Astrocyte of the cerebellum (primary cell): ENCODE measurements at regions of chr11 and their contacts with region 1.

Region 1: GRCh38 chr11:120511116-120511819 is at the start of gene GRIK4:
- DNase-seq: peak; percentile 40
- H3K4me3 ChIP-seq: peak within 1 kb of the TSS; percentile 36
- CTCF ChIP-seq: peak; percentile 85

Region 2: GRCh38 chr11:120554766-120555432 is 43.6 kb after region 1 on chr11:
- in situ Hi-C with region 1: loop called (anchors 5 kb)
- DNase-seq: peak; percentile 24
- H3K4me3 ChIP-seq: no peak overlapping the region
- CTCF ChIP-seq: no peak

Region 3: DNA sequence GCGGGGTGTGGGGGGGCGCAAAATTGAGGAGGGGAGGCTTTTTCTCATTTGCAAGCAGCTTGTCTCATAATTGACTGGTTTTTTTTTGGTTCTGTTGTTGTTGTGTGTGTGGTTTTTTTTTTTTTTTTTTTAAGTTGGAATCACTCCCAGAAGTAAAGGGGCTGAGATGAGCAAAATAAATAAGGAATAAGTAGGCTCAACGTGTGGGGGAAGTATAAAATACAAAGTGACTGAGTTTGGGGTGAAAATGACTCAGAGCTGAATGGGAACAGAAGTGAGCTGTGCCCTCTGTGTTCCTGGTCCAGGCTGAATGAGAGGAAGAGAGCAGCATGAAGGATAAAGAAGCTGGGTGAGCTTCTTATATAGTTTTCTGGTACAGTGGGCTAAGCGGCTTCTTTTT is 90.3 kb after region 1 on chr11:
- in situ Hi-C with region 1: no loop called
- DNase-seq: peak; percentile 38
- H3K4me3 ChIP-seq: no peak overlapping the region
- CTCF ChIP-seq: no peak

Region 4: DNA sequence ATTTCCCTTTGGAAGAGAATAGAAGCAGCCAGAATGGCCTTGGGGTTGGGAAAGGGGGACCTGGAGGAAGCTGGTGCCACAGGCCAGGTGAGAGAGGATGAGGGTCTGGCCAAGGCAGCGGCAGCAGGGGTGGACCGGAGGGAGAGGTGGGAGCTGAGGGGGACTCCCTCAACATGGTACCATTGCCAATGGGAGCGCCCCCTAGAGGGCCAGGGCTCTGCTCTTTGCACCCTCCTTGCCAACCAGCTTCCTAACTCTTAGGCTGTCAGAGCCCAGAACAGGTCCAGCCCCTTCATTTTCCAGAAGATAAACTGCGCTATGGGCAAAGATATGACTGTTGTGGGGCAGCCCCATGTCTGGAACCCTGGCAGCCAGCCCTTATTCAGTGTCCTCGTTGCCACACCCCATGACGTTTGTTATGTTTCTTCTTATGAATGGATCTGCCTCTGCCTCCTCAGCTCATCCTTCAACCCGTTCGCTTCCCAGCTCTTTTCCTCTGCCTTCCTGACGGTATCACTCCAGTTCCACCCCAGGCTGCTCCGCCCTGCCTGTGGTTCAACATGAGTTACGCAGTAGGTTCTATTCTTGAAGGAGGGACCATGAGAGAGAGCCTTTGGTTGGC is 185.4 kb after region 1 on chr11:
- in situ Hi-C with region 1: loop called (anchors 25 kb)
- DNase-seq: no peak
- H3K4me3 ChIP-seq: no peak overlapping the region
- CTCF ChIP-seq: no peak